Activated CD4-positive, alpha-beta memory T cell treated with anti-CD3 and anti-CD28 coated beads for 36 hours (primary cell): ENCODE measurements at regions of chr2 and their contacts with region 1.

Region 1: GRCh38 chr2:44802777-44803424 is 138.6 kb upstream of the SIX3 start:
- DNase-seq: no peak
- H3K4me3 Mint-ChIP-seq: no peak overlapping the region
- H3K27ac Mint-ChIP-seq: no peak overlapping the region
- H3K4me1 Mint-ChIP-seq: peaks cover 10% of the 10 kb centered on the region
- H3K27me3 Mint-ChIP-seq: peaks cover 78% of the 10 kb centered on the region

Region 2: GRCh38 chr2:44934983-44935728 is 132.3 kb after region 1 on chr2:
- CTCF ChIA-PET with region 1: no interaction called
- POLR2A ChIA-PET with region 1: no interaction called
- intact Hi-C with region 1: loop called (anchors 5 kb)
- DNase-seq: no peak
- H3K4me3 Mint-ChIP-seq: no peak overlapping the region
- H3K27ac Mint-ChIP-seq: no peak overlapping the region
- H3K4me1 Mint-ChIP-seq: peaks cover 19% of the 10 kb centered on the region
- H3K27me3 Mint-ChIP-seq: peaks cover 75% of the 10 kb centered on the region

Region 3: GRCh38 chr2:45009303-45009927 is 206.5 kb after region 1 on chr2 and contains the start of gene SIX2:
- CTCF ChIA-PET with region 1: no interaction called
- POLR2A ChIA-PET with region 1: no interaction called
- intact Hi-C with region 1: loop called (anchors 10 kb)
- DNase-seq: no peak
- H3K4me3 Mint-ChIP-seq: peak within 1 kb of the TSS; percentile 43
- H3K27ac Mint-ChIP-seq: no peak within 1 kb of the TSS
- H3K4me1 Mint-ChIP-seq: peaks cover 29% of the 10 kb centered on the region
- H3K27me3 Mint-ChIP-seq: peaks cover 74% of the 10 kb centered on the region
- total RNA-seq, gene SIX2: not detected

Region 4: GRCh38 chr2:45343251-45344017 is 540.5 kb after region 1 on chr2:
- CTCF ChIA-PET with region 1: no interaction called
- POLR2A ChIA-PET with region 1: no interaction called
- intact Hi-C with region 1: no loop called
- DNase-seq: no peak
- H3K4me3 Mint-ChIP-seq: no peak overlapping the region
- H3K27ac Mint-ChIP-seq: no peak overlapping the region
- H3K4me1 Mint-ChIP-seq: no peaks in the 10 kb centered on the region
- H3K27me3 Mint-ChIP-seq: peaks cover 7% of the 10 kb centered on the region

Region 5: DNA sequence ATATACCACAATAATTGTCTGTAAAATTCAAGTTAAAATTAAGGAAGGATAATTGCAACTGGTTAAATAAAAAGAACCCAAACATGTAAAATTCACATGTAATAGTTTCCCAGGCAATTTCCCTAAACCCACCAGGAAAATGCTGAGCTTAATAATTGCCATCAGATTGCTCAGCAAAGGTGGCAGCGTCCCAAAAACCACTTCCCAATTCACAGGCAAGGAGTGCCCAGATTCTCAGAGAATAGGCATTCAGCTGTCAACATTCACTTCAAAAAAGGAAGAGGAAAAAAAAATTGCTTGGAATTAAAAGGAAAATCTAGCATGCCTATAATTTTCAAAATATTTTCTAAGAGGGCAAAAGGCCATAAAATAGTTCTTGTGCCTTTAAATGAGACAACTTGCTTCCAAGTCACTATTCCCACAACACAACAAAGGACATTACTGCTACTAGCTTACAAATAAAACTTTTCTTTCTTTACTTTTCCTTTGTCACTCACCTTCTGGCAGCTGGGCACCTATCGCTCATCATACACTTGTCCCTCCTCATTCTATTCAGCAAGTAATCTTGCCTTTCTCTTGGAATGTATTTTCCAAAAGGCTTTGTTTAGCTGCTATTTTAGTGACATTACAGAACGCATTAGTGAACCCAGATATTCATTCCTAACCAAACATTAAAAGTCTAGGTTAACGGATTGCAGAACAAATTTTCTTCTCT is 793.0 kb after region 1 on chr2:
- CTCF ChIA-PET with region 1: no interaction called
- POLR2A ChIA-PET with region 1: no interaction called
- intact Hi-C with region 1: no loop called
- DNase-seq: no peak
- H3K4me3 Mint-ChIP-seq: no peak overlapping the region
- H3K27ac Mint-ChIP-seq: no peak overlapping the region
- H3K4me1 Mint-ChIP-seq: peaks cover 8% of the 10 kb centered on the region
- H3K27me3 Mint-ChIP-seq: no peaks in the 10 kb centered on the region